IMR-90 (cell line): ENCODE measurements at regions of chr19 and their contacts with region 1.

Region 1: GRCh38 chr19:48646001-48646721 is at the start of gene CA11:
- DNase-seq: peak; percentile 72
- ATAC-seq: peak; percentile 96
- H3K4me3 ChIP-seq: peak within 1 kb of the TSS; percentile 44
- H3K27ac ChIP-seq: peak within 1 kb of the TSS; percentile 21; the same call in 1 of the 2 replicates
- H3K4me1 ChIP-seq: peaks cover 5% of the 10 kb centered on the region
- H3K27me3 ChIP-seq: no peaks in the 10 kb centered on the region
- CTCF ChIP-seq: peak; percentile 87
- POLR2A ChIP-seq: peak; percentile 29; the same call in 1 of the 2 replicates
- RAD21 ChIP-seq: peak; percentile 87
- total RNA-seq, gene CA11: 1.3 and 1.7 TPM in 2 replicates

Region 2: GRCh38 chr19:48379058-48379457 is 267.1 kb before region 1 on chr19:
- CTCF ChIA-PET with region 1: no interaction called
- POLR2A ChIA-PET with region 1: no interaction called
- dilution Hi-C with region 1: no loop called
- in situ Hi-C with region 1: no loop called
- intact Hi-C with region 1: no loop called
- DNase-seq: no peak
- ATAC-seq: no peak
- H3K4me3 ChIP-seq: no peak overlapping the region
- H3K27ac ChIP-seq: no peak overlapping the region
- H3K4me1 ChIP-seq: no peaks in the 10 kb centered on the region
- H3K27me3 ChIP-seq: peaks cover 2% of the 10 kb centered on the region; the same call in 1 of the 2 replicates
- CTCF ChIP-seq: no peak
- POLR2A ChIP-seq: no peak
- RAD21 ChIP-seq: no peak

Region 3: DNA sequence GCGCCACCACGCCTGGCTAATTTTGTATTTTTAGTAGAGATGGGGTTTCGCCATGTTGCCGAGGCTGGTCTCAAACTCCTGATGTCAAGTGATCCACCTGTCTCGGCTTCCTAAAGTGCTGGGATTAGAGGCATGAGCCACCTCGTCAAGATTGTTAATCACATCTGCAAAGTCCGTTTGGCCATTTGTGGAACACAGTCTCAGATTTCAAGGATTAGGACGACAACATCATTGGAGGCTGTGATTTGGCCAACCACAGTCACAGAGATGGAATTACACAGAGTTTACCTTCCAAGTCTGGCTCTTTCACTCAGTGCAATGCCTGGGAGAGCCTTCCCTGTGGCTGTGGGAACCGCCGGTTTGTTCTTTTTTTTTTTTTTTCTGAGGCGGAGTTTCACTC is 76.3 kb before region 1 on chr19:
- CTCF ChIA-PET with region 1: no interaction called
- POLR2A ChIA-PET with region 1: no interaction called
- dilution Hi-C with region 1: no loop called
- in situ Hi-C with region 1: no loop called
- intact Hi-C with region 1: no loop called
- DNase-seq: peak; percentile 56
- ATAC-seq: 0 out of 2 replicates have a peak, but pooled peaks have one; percentile 8
- H3K4me3 ChIP-seq: no peak overlapping the region
- H3K27ac ChIP-seq: no peak overlapping the region
- H3K4me1 ChIP-seq: peaks cover 3% of the 10 kb centered on the region; the same call in 1 of the 2 replicates
- H3K27me3 ChIP-seq: no peaks in the 10 kb centered on the region
- CTCF ChIP-seq: no peak
- POLR2A ChIP-seq: no peak
- RAD21 ChIP-seq: no peak

Region 4: GRCh38 chr19:48588670-48589399 is 57.3 kb before region 1 on chr19:
- CTCF ChIA-PET with region 1: no interaction called
- POLR2A ChIA-PET with region 1: no interaction called
- dilution Hi-C with region 1: no loop called
- in situ Hi-C with region 1: no loop called
- intact Hi-C with region 1: no loop called
- DNase-seq: peak; percentile 78
- ATAC-seq: peak; percentile 95
- H3K4me3 ChIP-seq: peak overlapping the region; percentile 47
- H3K27ac ChIP-seq: no peak overlapping the region; the same call in 1 of the 2 replicates
- H3K4me1 ChIP-seq: peaks cover 2% of the 10 kb centered on the region; the same call in 1 of the 2 replicates
- H3K27me3 ChIP-seq: no peaks in the 10 kb centered on the region; the same call in 1 of the 2 replicates
- CTCF ChIP-seq: peak; percentile 94
- POLR2A ChIP-seq: no peak
- RAD21 ChIP-seq: peak; percentile 66

Region 5: GRCh38 chr19:48780631-48781391 is 134.7 kb after region 1 on chr19:
- CTCF ChIA-PET with region 1: interaction called, 6 read pairs
- POLR2A ChIA-PET with region 1: no interaction called
- dilution Hi-C with region 1: no loop called
- in situ Hi-C with region 1: no loop called
- intact Hi-C with region 1: loop called (anchors 2 kb)
- DNase-seq: peak; percentile 58
- ATAC-seq: peak; percentile 55
- H3K4me3 ChIP-seq: no peak overlapping the region
- H3K27ac ChIP-seq: no peak overlapping the region; the same call in 1 of the 2 replicates
- H3K4me1 ChIP-seq: peaks cover 5% of the 10 kb centered on the region
- H3K27me3 ChIP-seq: peaks cover 6% of the 10 kb centered on the region
- CTCF ChIP-seq: no peak
- POLR2A ChIP-seq: no peak
- RAD21 ChIP-seq: no peak

Region 6: GRCh38 chr19:48835734-48836088 is 189.6 kb after region 1 on chr19:
- CTCF ChIA-PET with region 1: no interaction called
- POLR2A ChIA-PET with region 1: no interaction called
- dilution Hi-C with region 1: no loop called
- in situ Hi-C with region 1: loop called (anchors 10 kb)
- intact Hi-C with region 1: loop called (anchors 5 kb)
- DNase-seq: peak; percentile 71
- ATAC-seq: peak; percentile 78
- H3K4me3 ChIP-seq: peak overlapping the region; percentile 25
- H3K27ac ChIP-seq: peak overlapping the region; percentile 12; the same call in 1 of the 2 replicates
- H3K4me1 ChIP-seq: peaks cover 12% of the 10 kb centered on the region
- H3K27me3 ChIP-seq: no peaks in the 10 kb centered on the region
- CTCF ChIP-seq: peak; percentile 89
- POLR2A ChIP-seq: no peak
- RAD21 ChIP-seq: peak; percentile 87

Region 7: DNA sequence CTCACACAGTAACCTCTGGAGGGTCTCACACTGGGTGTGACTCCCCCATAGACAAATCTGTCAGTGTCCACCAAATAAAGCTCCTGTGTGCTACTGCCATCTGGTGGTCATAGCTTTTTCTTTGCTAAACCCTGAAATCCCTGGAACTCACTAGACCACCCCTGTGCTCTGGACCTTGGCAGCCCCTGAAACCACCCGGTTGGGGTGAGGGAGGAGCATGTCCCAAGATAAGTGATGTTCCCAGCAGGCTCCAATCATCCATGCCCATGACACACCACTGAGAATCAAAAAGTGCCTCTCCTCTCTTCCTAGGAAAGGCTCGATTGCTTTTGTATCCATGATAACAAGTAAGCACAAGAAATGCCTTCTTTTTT is 196.6 kb after region 1 on chr19:
- CTCF ChIA-PET with region 1: no interaction called
- POLR2A ChIA-PET with region 1: interaction called, 3 read pairs
- dilution Hi-C with region 1: no loop called
- in situ Hi-C with region 1: loop called (anchors 10 kb)
- intact Hi-C with region 1: loop called (anchors 5 kb)
- DNase-seq: peak; percentile 48
- ATAC-seq: peak; percentile 79
- H3K4me3 ChIP-seq: no peak overlapping the region
- H3K27ac ChIP-seq: no peak overlapping the region
- H3K4me1 ChIP-seq: no peaks in the 10 kb centered on the region
- H3K27me3 ChIP-seq: no peaks in the 10 kb centered on the region
- CTCF ChIP-seq: peak; percentile 69
- POLR2A ChIP-seq: no peak
- RAD21 ChIP-seq: peak; percentile 64

Region 8: GRCh38 chr19:48982280-48982679 is 336.1 kb after region 1 on chr19:
- CTCF ChIA-PET with region 1: no interaction called
- POLR2A ChIA-PET with region 1: no interaction called
- dilution Hi-C with region 1: no loop called
- in situ Hi-C with region 1: no loop called
- intact Hi-C with region 1: no loop called
- DNase-seq: no peak
- ATAC-seq: no peak
- H3K4me3 ChIP-seq: no peak overlapping the region
- H3K27ac ChIP-seq: no peak overlapping the region
- H3K4me1 ChIP-seq: peaks cover 7% of the 10 kb centered on the region
- H3K27me3 ChIP-seq: no peaks in the 10 kb centered on the region
- CTCF ChIP-seq: no peak
- POLR2A ChIP-seq: no peak
- RAD21 ChIP-seq: no peak